Panc1 (cell line): ENCODE measurements at regions of chr2 and their contacts with region 1.

Region 1: GRCh38 chr2:84495539-84496146 is 20.7 kb upstream of the DNAH6 start:
- DNase-seq: peak; percentile 55
- ATAC-seq: peak; percentile 92
- H3K4me3 ChIP-seq: no peak overlapping the region
- H3K27ac ChIP-seq: no peak overlapping the region
- H3K4me1 ChIP-seq: no peaks in the 10 kb centered on the region
- H3K27me3 ChIP-seq: no peaks in the 10 kb centered on the region; the same call in 1 of the 2 replicates
- CTCF ChIP-seq: peak; percentile 69

Region 2: DNA sequence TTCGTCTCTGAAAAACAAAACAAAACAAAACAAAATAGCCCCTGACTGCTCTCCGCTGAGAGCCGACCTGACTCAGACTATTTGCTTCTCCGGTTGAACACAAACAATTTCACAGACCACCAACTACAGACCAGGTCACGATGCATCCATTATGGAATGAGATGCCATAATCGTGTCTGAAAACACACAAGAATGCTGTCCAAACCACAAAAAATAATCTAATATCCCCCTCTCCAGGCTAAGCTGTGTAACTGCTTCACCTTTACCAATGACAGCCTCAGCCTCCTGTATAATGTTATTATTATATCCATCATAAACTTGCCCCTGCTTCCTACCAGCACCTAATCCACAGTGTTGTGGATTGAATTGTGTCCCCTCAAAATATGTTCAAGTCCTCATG is 135.4 kb after region 1 on chr2:
- CTCF ChIA-PET with region 1: no interaction called
- POLR2A ChIA-PET with region 1: no interaction called
- in situ Hi-C with region 1: no loop called
- intact Hi-C with region 1: loop called (anchors 1 kb)
- DNase-seq: peak; percentile 10
- ATAC-seq: peak; percentile 81; the same call in 1 of the 2 replicates
- H3K4me3 ChIP-seq: no peak overlapping the region
- H3K27ac ChIP-seq: no peak overlapping the region
- H3K4me1 ChIP-seq: no peaks in the 10 kb centered on the region
- H3K27me3 ChIP-seq: peaks cover 4% of the 10 kb centered on the region; the same call in 1 of the 2 replicates
- CTCF ChIP-seq: peak; percentile 69

Region 3: GRCh38 chr2:84865181-84865783 is 369.6 kb after region 1 on chr2:
- CTCF ChIA-PET with region 1: no interaction called
- POLR2A ChIA-PET with region 1: no interaction called
- in situ Hi-C with region 1: no loop called
- intact Hi-C with region 1: loop called (anchors 5 kb)
- DNase-seq: no peak
- ATAC-seq: peak; percentile 65
- H3K4me3 ChIP-seq: no peak overlapping the region
- H3K27ac ChIP-seq: no peak overlapping the region
- H3K4me1 ChIP-seq: no peaks in the 10 kb centered on the region
- H3K27me3 ChIP-seq: peaks cover 4% of the 10 kb centered on the region; the same call in 1 of the 2 replicates
- CTCF ChIP-seq: peak; percentile 63

Region 4: GRCh38 chr2:84881581-84882414 is 386.2 kb after region 1 on chr2:
- CTCF ChIA-PET with region 1: no interaction called
- POLR2A ChIA-PET with region 1: no interaction called
- in situ Hi-C with region 1: no loop called
- intact Hi-C with region 1: loop called (anchors 5 kb)
- DNase-seq: peak; percentile 80
- ATAC-seq: peak; percentile 89
- H3K4me3 ChIP-seq: peak overlapping the region; percentile 46 to 78
- H3K27ac ChIP-seq: no peak overlapping the region
- H3K4me1 ChIP-seq: peaks cover 12% of the 10 kb centered on the region
- H3K27me3 ChIP-seq: peaks cover 21% of the 10 kb centered on the region
- CTCF ChIP-seq: peak; percentile 91

Region 5: DNA sequence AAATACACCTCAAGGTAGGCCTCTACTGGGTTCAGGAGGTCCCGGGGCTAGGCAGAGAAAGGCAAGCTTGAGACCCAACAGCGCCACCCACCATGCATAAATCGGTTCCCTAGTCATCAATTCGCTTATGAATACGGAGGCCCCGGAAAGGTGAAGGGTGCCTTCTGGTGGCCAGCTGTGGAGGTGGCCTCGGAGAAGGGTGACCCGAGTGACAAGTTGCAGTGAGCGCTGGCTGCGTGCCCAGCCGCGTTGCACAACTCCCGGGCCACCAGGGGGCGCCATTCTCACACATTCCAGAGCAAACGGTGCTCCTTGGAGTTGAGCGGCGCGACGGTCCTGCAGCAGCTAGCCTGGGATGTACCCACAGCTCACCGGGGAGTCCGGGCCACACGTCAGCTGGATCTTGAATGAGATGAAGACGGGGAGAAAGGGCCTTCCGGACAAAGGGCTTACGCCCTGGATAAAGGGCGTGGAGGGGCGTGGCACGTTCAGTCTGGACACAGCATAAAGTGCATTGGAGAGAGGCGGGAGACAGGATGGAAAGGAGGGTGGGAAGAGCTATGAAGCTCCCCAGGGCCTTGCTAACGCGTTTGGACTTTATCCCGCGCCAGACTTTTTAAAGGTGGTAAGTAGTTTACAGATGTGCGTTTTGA is 430.2 kb after region 1 on chr2:
- CTCF ChIA-PET with region 1: no interaction called
- POLR2A ChIA-PET with region 1: no interaction called
- in situ Hi-C with region 1: no loop called
- intact Hi-C with region 1: loop called (anchors 5 kb)
- DNase-seq: peak; percentile 97
- ATAC-seq: peak; percentile 91
- H3K4me3 ChIP-seq: peak overlapping the region; percentile 62 to 79
- H3K27ac ChIP-seq: peak overlapping the region; percentile 60
- H3K4me1 ChIP-seq: peaks cover 17% of the 10 kb centered on the region
- H3K27me3 ChIP-seq: no peaks in the 10 kb centered on the region
- CTCF ChIP-seq: peak; percentile 100